Transverse colon (tissue), 4 donors: ENCODE measurements at regions of chr14 and their contacts with region 1.

Region 1: DNA sequence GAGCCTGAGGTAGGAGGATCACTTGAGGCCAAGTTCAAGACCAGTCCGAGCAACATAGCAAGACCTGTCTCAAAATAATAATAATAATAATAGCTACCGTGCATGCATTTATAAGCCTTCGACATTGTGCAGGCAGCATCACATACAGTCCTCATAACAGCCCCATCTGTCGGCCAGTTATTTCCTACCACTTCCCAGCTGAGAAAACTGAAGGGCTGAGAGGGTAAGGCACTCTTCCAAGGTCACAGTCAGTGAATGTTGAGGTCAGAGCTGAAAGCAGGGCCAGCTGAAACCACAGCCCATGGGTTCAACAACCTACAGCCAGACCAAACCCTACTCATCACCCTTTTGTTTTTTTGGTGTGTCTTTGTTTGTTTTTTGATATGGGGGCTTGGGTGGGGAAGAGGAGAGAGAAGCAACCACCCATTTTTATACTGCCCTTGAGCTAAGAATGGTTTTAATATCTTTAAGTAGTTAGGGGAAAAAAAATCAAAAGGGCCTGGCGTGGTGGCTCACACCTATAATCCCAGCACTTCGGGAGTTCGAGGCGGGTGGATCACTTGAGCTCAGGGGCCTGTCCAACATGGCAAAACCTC is 16.8 kb upstream of the ITPK1 start:
- DNase-seq: no peak
- H3K4me3 ChIP-seq: no peak overlapping the region
- H3K27ac ChIP-seq: peak overlapping the region; percentile 4 to 16 (median 8)
- H3K4me1 ChIP-seq: peaks cover 0 to 32% (median 8%) of the 10 kb centered on the region in 4 donors
- H3K27me3 ChIP-seq: no peaks in the 10 kb centered on the region
- CTCF ChIP-seq: peak; percentile 37 to 51 (median 43)
- EP300 ChIP-seq: no peak
- POLR2A ChIP-seq: no peak

Region 2: GRCh38 chr14:92945959-92946846 is 186.4 kb before region 1 on chr14:
- in situ Hi-C with region 1: loop called in 2 of 4 experiments (anchors 10 kb)
- intact Hi-C with region 1: no loop called
- DNase-seq: peak; percentile 88
- H3K4me3 ChIP-seq: no peak overlapping the region
- H3K27ac ChIP-seq: peak overlapping the region in 3 of 4 donors; percentile 39 to 45 (median 43)
- H3K4me1 ChIP-seq: peaks cover 0 to 7% (median 4%) of the 10 kb centered on the region in 4 donors
- H3K27me3 ChIP-seq: no peaks in the 10 kb centered on the region
- CTCF ChIP-seq: no peak
- EP300 ChIP-seq: no peak
- POLR2A ChIP-seq: no peak

Region 3: GRCh38 chr14:93103392-93104080 is 29.0 kb before region 1 on chr14:
- in situ Hi-C with region 1: no loop called
- intact Hi-C with region 1: no loop called
- DNase-seq: peak; percentile 83
- H3K4me3 ChIP-seq: peak overlapping the region in 1 of 4 donors; percentile 5
- H3K27ac ChIP-seq: peak overlapping the region; percentile 27 to 69 (median 55)
- H3K4me1 ChIP-seq: peaks cover 25 to 67% (median 40%) of the 10 kb centered on the region in 4 donors
- H3K27me3 ChIP-seq: no peaks in the 10 kb centered on the region
- CTCF ChIP-seq: no peak
- EP300 ChIP-seq: no peak
- POLR2A ChIP-seq: no peak